B cell (primary cell): ENCODE measurements at regions of chr1 and their contacts with region 1.

Region 1: DNA sequence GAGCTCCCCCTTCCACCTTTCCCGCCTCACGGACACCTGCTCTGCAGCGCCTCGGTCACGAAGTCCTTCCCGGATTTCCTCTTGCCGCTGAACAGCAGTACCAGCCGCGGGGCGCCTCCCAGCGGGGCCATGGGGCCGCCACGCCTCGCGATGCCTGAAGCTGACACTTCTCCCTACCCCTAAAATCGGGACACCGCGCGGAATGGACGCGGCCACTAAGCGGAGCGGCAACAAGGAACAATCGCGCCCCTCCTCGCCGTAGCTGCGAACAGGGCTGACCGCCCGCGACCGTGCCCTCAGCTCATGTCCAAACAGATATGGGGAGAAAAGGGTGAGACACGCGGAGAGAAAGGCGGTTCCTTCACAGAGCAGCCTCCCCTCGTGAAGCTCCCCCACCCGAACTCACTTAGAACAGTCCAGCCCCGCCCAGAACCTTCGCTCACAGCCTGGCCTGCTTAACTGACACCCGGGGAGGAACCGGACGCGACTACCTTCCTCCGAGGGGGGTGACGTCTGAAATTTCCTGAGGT is at the start of gene PMVK:
- DNase-seq: peak; percentile 99
- ATAC-seq: peak; percentile 89
- H3K4me3 ChIP-seq: peak within 1 kb of the TSS; percentile 76 to 90 (median 80)
- H3K4me3 Mint-ChIP-seq: peak within 1 kb of the TSS; percentile 97
- H3K27ac ChIP-seq: peak within 1 kb of the TSS; percentile 98
- H3K27ac Mint-ChIP-seq: peak within 1 kb of the TSS; percentile 100
- H3K4me1 ChIP-seq: peaks cover 32 to 50% of the 10 kb centered on the region in 2 donors
- H3K4me1 Mint-ChIP-seq: peaks cover 51% of the 10 kb centered on the region
- H3K27me3 ChIP-seq: no peaks in the 10 kb centered on the region
- H3K27me3 Mint-ChIP-seq: no peaks in the 10 kb centered on the region
- CTCF ChIP-seq: peak; percentile 40
- total RNA-seq, gene PMVK: 15.0 TPM in 2 replicates

Region 2: GRCh38 chr1:154324669-154325582 is 611.7 kb before region 1 on chr1 and contains the start of gene ATP8B2:
- CTCF ChIA-PET with region 1: interaction called, 4 read pairs
- POLR2A ChIA-PET with region 1: no interaction called
- intact Hi-C with region 1: loop called (anchors 5 kb)
- DNase-seq: peak; percentile 89
- ATAC-seq: peak; percentile 68
- H3K4me3 ChIP-seq: peak within 1 kb of the TSS; percentile 57 to 90 (median 87)
- H3K4me3 Mint-ChIP-seq: peak within 1 kb of the TSS; percentile 93
- H3K27ac ChIP-seq: peak within 1 kb of the TSS; percentile 48 to 67
- H3K27ac Mint-ChIP-seq: peak within 1 kb of the TSS; percentile 89
- H3K4me1 ChIP-seq: peaks cover 30 to 46% of the 10 kb centered on the region in 2 donors
- H3K4me1 Mint-ChIP-seq: peaks cover 42% of the 10 kb centered on the region
- H3K27me3 ChIP-seq: peaks cover 0 to 18% (median 3%) of the 10 kb centered on the region in 4 experiments
- H3K27me3 Mint-ChIP-seq: peaks cover 15% of the 10 kb centered on the region
- CTCF ChIP-seq: peak; percentile 92
- total RNA-seq, gene ATP8B2: 31.1 and 32.4 TPM in 2 replicates

Region 3: GRCh38 chr1:154607609-154608396 is 328.8 kb before region 1 on chr1 and contains the start of gene ADAR:
- CTCF ChIA-PET with region 1: no interaction called
- POLR2A ChIA-PET with region 1: no interaction called
- intact Hi-C with region 1: loop called (anchors 5 kb)
- DNase-seq: peak; percentile 96
- ATAC-seq: peak; percentile 92
- H3K4me3 ChIP-seq: peak within 1 kb of the TSS; percentile 83 to 96 (median 93)
- H3K4me3 Mint-ChIP-seq: peak within 1 kb of the TSS; percentile 98
- H3K27ac ChIP-seq: peak within 1 kb of the TSS; percentile 86 to 97
- H3K27ac Mint-ChIP-seq: peak within 1 kb of the TSS; percentile 96
- H3K4me1 ChIP-seq: peaks cover 50 to 60% of the 10 kb centered on the region in 2 donors
- H3K4me1 Mint-ChIP-seq: peaks cover 61% of the 10 kb centered on the region
- H3K27me3 ChIP-seq: no peaks in the 10 kb centered on the region
- H3K27me3 Mint-ChIP-seq: no peaks in the 10 kb centered on the region
- CTCF ChIP-seq: no peak
- total RNA-seq, gene ADAR: 221 and 241 TPM in 2 replicates

Region 4: DNA sequence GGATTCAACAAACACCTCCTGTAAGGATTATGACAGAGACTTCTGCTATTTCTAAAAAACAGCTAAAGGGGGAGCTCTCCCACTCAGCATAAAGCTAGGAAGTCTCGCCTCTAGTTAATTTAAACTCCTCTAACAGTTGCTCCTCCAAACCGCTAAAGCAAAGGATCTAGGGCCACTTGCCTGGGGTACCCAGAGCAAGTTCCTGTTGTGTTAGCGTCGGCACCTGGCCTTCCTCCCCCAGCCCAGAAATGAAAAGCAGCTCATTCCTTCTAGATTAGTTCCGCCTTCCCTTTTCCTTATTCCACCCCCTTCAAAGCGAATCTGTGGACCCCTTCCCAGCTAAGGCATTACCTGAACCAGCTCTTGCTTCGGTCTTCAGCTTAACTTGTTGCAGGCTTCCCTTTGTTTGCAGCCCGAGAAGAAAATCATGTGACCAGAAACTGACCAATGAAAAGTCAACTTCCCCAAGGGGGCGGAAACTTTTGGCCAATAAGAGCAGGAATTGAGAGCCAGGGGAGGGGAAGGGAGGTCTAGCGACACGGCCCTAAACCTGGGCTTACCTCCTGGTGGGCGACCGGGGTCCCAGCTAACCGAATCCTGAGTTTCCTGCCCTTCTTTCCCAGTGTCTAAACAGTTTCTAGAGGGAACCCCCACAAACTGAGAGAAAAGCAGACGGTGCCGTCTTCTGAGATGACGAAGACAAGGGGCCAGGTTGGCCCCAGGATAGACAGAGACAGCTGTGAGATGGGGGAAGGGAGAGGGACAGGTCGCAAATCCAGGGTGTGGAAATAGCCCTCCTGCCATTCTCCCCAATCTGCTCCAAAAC is 19.3 kb after region 1 on chr1 and contains the start of gene PBXIP1:
- CTCF ChIA-PET with region 1: interaction called, 20 read pairs
- POLR2A ChIA-PET with region 1: interaction called, 9 read pairs
- intact Hi-C with region 1: loop called (anchors 1 kb)
- DNase-seq: peak; percentile 94
- ATAC-seq: peak; percentile 68
- H3K4me3 ChIP-seq: peak within 1 kb of the TSS; percentile 71 to 97 (median 83)
- H3K4me3 Mint-ChIP-seq: peak within 1 kb of the TSS; percentile 92
- H3K27ac ChIP-seq: peak within 1 kb of the TSS; percentile 99
- H3K27ac Mint-ChIP-seq: peak within 1 kb of the TSS; percentile 96
- H3K4me1 ChIP-seq: peaks cover 59 to 68% of the 10 kb centered on the region in 2 donors
- H3K4me1 Mint-ChIP-seq: peaks cover 72% of the 10 kb centered on the region
- H3K27me3 ChIP-seq: no peaks in the 10 kb centered on the region
- H3K27me3 Mint-ChIP-seq: no peaks in the 10 kb centered on the region
- CTCF ChIP-seq: peak; percentile 39
- total RNA-seq, gene PBXIP1: 212 and 219 TPM in 2 replicates

Region 5: GRCh38 chr1:154974063-154974807 is 37.6 kb after region 1 on chr1 and contains the start of gene CKS1B:
- CTCF ChIA-PET with region 1: interaction called, 5 read pairs
- POLR2A ChIA-PET with region 1: interaction called, 14 read pairs
- intact Hi-C with region 1: loop called (anchors 1 kb)
- DNase-seq: peak; percentile 100
- ATAC-seq: peak; percentile 80
- H3K4me3 ChIP-seq: peak within 1 kb of the TSS; percentile 71 to 99 (median 90)
- H3K4me3 Mint-ChIP-seq: no peak within 1 kb of the TSS
- H3K27ac ChIP-seq: peak within 1 kb of the TSS; percentile 90 to 94
- H3K27ac Mint-ChIP-seq: no peak within 1 kb of the TSS
- H3K4me1 ChIP-seq: peaks cover 22 to 44% of the 10 kb centered on the region in 2 donors
- H3K4me1 Mint-ChIP-seq: peaks cover 29% of the 10 kb centered on the region
- H3K27me3 ChIP-seq: no peaks in the 10 kb centered on the region
- H3K27me3 Mint-ChIP-seq: no peaks in the 10 kb centered on the region
- CTCF ChIP-seq: no peak
- total RNA-seq, gene CKS1B: 16.8 and 17.5 TPM in 2 replicates

Region 6: GRCh38 chr1:155001675-155002463 is 65.2 kb after region 1 on chr1:
- CTCF ChIA-PET with region 1: interaction called, 9 read pairs
- POLR2A ChIA-PET with region 1: interaction called, 6 read pairs
- intact Hi-C with region 1: loop called (anchors 1 kb)
- DNase-seq: peak; percentile 98
- ATAC-seq: peak; percentile 81
- H3K4me3 ChIP-seq: peak overlapping the region; percentile 74 to 95 (median 86)
- H3K4me3 Mint-ChIP-seq: peak overlapping the region; percentile 90
- H3K27ac ChIP-seq: peak overlapping the region; percentile 73 to 80
- H3K27ac Mint-ChIP-seq: peak overlapping the region; percentile 96
- H3K4me1 ChIP-seq: peaks cover 41 to 50% of the 10 kb centered on the region in 2 donors
- H3K4me1 Mint-ChIP-seq: peaks cover 51% of the 10 kb centered on the region
- H3K27me3 ChIP-seq: no peaks in the 10 kb centered on the region
- H3K27me3 Mint-ChIP-seq: no peaks in the 10 kb centered on the region
- CTCF ChIP-seq: no peak

Region 7: GRCh38 chr1:155139895-155140631 is 203.4 kb after region 1 on chr1 and contains the start of gene DPM3:
- CTCF ChIA-PET with region 1: no interaction called
- POLR2A ChIA-PET with region 1: no interaction called
- intact Hi-C with region 1: no loop called
- DNase-seq: peak; percentile 88
- ATAC-seq: peak; percentile 65
- H3K4me3 ChIP-seq: peak within 1 kb of the TSS; percentile 66 to 89 (median 87)
- H3K4me3 Mint-ChIP-seq: peak within 1 kb of the TSS; percentile 99
- H3K27ac ChIP-seq: peak within 1 kb of the TSS; percentile 58 to 79
- H3K27ac Mint-ChIP-seq: peak within 1 kb of the TSS; percentile 94
- H3K4me1 ChIP-seq: peaks cover 17 to 24% of the 10 kb centered on the region in 2 donors
- H3K4me1 Mint-ChIP-seq: peaks cover 43% of the 10 kb centered on the region
- H3K27me3 ChIP-seq: no peaks in the 10 kb centered on the region
- H3K27me3 Mint-ChIP-seq: no peaks in the 10 kb centered on the region
- CTCF ChIP-seq: no peak
- total RNA-seq, gene DPM3: 39.9 and 41.7 TPM in 2 replicates